ENCODE measurements at regions of chr20 and their contacts with region 1.

Region 1: GRCh38 chr20:1663917-1664316 is 6.3 kb upstream of the SIRPG start:
- DNase-seq: peak; percentile 65
- H3K4me3 Mint-ChIP-seq: peak overlapping the region; percentile 85
- H3K27ac Mint-ChIP-seq: peak overlapping the region; percentile 90
- H3K4me1 Mint-ChIP-seq: peaks cover 80% of the 10 kb centered on the region
- H3K27me3 Mint-ChIP-seq: no peaks in the 10 kb centered on the region

Region 2: DNA sequence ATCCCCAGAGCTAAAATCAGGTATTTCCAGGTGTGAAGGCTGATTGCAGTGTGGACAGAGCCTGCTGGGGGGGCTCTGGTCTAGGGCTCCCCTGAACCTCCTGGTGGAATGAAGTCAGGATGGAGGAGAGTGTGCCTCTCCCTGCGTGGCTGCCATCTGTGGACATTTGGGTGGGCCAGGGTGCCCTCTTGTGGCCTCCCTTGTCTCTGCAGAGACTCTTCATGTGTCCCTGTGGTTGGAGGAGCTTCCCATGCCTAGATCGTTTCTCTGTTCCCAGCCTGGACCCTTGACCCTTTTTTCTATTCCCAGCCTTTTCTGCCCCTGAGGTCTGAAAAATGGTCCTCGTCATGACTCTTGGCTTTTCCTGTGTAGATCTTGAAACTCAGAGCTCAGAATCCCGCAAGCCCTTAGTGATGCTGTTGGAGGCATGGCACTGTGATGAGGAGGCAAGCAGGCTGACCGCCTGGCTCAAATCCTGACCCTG is 555.4 kb before region 1 on chr20:
- intact Hi-C with region 1: no loop called
- DNase-seq: peak; percentile 83
- H3K4me3 Mint-ChIP-seq: no peak overlapping the region
- H3K27ac Mint-ChIP-seq: no peak overlapping the region
- H3K4me1 Mint-ChIP-seq: no peaks in the 10 kb centered on the region
- H3K27me3 Mint-ChIP-seq: peaks cover 4% of the 10 kb centered on the region

Region 3: DNA sequence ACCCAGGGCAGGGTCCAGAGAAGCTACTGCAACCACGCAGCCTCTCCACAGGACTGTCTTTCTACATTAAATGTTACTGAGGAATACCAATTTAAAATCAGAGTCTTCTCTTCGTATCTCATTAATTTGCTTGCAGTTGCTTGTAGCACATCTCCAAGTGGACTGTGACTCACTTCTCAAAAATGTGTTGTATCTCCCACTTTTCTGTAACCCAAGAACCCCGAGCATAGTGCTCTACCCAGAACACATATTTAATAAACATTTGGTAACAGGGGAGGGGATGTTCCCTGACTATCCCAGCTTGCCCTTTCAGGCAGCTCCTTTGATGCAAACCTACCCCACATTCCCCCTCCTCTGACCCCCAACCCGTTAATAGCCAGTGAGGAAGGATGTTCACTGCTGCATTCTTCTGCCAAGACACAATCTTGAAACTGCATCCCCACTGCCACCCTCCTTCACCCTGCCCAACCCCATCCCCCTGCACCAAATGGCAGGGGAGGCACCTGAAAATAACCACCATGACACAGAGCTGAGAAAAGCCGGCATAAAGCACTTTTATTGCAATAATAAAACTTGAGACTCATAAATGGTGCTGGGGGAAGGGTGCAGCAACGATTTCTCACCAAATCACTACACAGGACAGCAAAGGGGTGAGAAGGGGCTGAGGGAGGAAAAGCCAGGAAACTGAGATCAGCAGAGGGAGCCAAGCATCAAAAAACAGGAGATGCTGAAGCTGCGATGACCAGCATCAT is 295.3 kb before region 1 on chr20:
- intact Hi-C with region 1: loop called (anchors 10 kb)
- DNase-seq: peak; percentile 46
- H3K4me3 Mint-ChIP-seq: no peak overlapping the region
- H3K27ac Mint-ChIP-seq: peak overlapping the region; percentile 41
- H3K4me1 Mint-ChIP-seq: peaks cover 59% of the 10 kb centered on the region
- H3K27me3 Mint-ChIP-seq: no peaks in the 10 kb centered on the region

Region 4: GRCh38 chr20:1555952-1556351 is 108.0 kb before region 1 on chr20:
- intact Hi-C with region 1: no loop called
- DNase-seq: no peak
- H3K4me3 Mint-ChIP-seq: no peak overlapping the region
- H3K27ac Mint-ChIP-seq: no peak overlapping the region
- H3K4me1 Mint-ChIP-seq: peaks cover 2% of the 10 kb centered on the region
- H3K27me3 Mint-ChIP-seq: no peaks in the 10 kb centered on the region

Region 5: DNA sequence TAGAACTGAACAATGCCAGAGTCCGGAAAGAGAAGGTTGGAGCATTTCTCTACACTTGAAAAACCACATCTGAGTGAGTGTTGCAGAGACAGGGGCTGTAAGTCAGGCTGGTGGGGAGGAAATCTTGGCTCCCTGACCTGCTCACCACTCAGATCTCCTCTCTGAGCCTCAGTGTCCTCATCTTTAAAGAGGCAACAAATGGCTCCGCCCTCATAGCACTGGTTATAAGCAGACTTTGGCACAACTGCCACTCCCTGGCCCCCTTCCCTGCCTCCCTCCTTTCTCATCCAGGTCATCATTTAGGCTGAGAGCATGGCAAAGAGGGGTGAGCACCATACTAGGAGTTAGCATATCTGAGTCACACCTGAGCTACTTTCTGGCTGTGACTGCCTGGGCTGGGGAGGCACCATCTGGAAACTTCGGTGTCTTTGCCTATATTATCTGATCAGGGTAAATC is 16.9 kb before region 1 on chr20:
- intact Hi-C with region 1: loop called (anchors 1 kb)
- DNase-seq: no peak
- H3K4me3 Mint-ChIP-seq: peak overlapping the region; percentile 29
- H3K27ac Mint-ChIP-seq: peak overlapping the region; percentile 92
- H3K4me1 Mint-ChIP-seq: peaks cover 45% of the 10 kb centered on the region
- H3K27me3 Mint-ChIP-seq: no peaks in the 10 kb centered on the region